Activated CD4-positive, alpha-beta memory T cell treated with anti-CD3 and anti-CD28 coated beads for 36 hours (primary cell): ENCODE measurements at regions of chr7 and their contacts with region 1.

Region 1: GRCh38 chr7:148962823-148963582 is 65.3 kb downstream of the PDIA4 start:
- DNase-seq: peak; percentile 81
- H3K4me3 Mint-ChIP-seq: peak overlapping the region; percentile 92
- H3K27ac Mint-ChIP-seq: peak overlapping the region; percentile 87
- H3K4me1 Mint-ChIP-seq: peaks cover 23% of the 10 kb centered on the region
- H3K27me3 Mint-ChIP-seq: no peaks in the 10 kb centered on the region

Region 2: DNA sequence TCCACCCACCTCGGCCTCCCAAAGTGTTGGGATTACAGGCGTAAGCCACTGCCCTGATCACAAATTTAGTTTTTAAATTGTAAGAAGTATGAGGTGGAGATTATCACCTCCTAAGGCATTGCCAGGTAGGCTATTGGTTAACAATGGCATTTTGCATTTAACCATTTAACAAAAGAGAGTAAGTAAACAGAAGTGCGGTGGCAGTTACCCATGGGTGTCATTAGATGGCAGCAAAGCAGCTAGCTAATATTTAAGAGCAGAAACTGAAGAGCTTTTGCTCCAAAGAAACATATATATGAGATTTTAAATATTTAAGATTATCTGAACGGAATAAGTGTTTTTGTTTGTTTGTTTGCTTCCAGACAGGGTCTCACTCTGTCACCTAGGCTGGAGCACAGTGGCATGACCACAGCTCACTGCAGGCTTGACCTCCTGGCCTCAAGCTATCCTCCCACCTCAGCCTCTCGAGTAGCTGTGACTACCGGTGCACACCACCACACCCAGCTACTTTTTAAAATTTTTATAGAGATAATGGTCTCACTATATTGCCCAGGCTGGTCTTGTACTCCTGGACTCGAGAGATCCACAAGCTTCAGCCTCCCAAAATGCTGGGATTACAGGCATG is 698.0 kb before region 1 on chr7:
- CTCF ChIA-PET with region 1: interaction called, 6 read pairs
- POLR2A ChIA-PET with region 1: no interaction called
- intact Hi-C with region 1: loop called (anchors 2 kb)
- DNase-seq: no peak
- H3K4me3 Mint-ChIP-seq: no peak overlapping the region
- H3K27ac Mint-ChIP-seq: no peak overlapping the region
- H3K4me1 Mint-ChIP-seq: peaks cover 8% of the 10 kb centered on the region
- H3K27me3 Mint-ChIP-seq: peaks cover 9% of the 10 kb centered on the region

Region 3: DNA sequence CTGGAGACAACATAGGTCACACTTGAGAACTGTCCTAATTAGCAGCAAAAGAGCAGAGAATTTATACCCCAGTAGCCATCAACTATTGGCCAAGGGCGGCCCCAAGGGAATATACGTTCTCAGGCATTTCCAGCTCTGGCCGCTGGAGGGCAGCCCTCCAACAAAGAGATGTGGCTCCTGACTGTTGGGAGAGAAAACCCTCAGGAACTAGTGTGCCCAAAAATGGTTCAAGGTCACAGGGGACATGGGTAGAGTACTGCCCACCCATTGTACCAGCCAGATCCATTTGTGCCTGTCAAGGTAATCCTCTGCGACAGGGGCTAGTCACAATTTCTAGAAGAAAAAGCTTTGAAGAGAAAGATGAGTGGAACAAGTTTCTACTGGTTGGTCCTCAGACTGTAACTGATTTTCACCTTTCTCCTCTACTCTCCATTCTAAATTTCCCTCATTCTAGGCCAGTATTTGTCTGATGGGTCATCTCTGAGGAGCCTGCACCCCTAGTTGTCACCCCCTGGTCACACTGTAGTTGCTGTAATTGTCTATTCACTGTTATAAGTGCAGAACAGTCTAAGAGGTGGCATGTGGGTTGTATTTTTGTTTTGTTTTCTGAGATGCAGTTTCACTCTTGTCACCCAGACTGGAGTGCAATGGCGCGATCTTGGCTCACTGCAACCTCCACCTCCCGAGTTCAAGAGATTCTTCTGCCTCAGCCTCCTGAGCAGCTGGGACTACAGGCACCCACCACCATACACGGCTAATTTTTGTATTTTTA is 387.2 kb before region 1 on chr7:
- CTCF ChIA-PET with region 1: interaction called, 30 read pairs
- POLR2A ChIA-PET with region 1: no interaction called
- intact Hi-C with region 1: loop called (anchors 1 kb)
- DNase-seq: peak; percentile 80
- H3K4me3 Mint-ChIP-seq: no peak overlapping the region
- H3K27ac Mint-ChIP-seq: no peak overlapping the region
- H3K4me1 Mint-ChIP-seq: peaks cover 6% of the 10 kb centered on the region
- H3K27me3 Mint-ChIP-seq: peaks cover 6% of the 10 kb centered on the region

Region 4: GRCh38 chr7:148773334-148773733 is 189.7 kb before region 1 on chr7:
- CTCF ChIA-PET with region 1: interaction called, 8 read pairs
- POLR2A ChIA-PET with region 1: no interaction called
- intact Hi-C with region 1: loop called (anchors 10 kb)
- DNase-seq: peak; percentile 57
- H3K4me3 Mint-ChIP-seq: no peak overlapping the region
- H3K27ac Mint-ChIP-seq: peak overlapping the region; percentile 86
- H3K4me1 Mint-ChIP-seq: peaks cover 28% of the 10 kb centered on the region
- H3K27me3 Mint-ChIP-seq: no peaks in the 10 kb centered on the region

Region 5: DNA sequence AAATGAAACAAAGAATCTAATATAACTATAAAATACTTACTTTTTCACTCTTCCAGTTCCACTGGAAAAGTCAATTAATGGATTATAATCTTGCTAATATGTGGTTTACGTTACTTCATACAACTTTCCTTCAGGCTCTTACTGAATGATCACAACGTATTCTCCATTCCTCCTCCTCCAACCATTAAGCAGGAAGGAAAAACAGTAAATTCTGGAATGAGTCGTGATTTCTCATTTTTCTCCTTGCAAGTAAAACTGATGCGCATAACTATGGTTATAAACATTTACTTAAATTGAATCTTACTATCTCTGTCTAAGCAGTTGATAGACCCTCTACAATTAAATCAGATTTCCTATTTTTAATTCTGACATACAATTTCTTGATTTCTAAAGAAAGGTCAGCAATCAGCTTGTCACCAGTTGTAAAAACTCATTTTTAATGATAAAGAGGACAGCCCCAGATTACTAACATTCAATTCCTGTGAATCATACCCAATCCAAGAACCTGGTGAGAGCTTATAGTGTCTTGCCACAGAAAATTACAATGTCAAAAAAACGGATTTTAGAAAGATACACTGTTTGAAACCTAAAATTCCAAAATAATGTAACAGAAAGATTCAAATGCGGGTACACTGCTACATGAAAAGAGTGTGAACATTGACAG is 143.2 kb before region 1 on chr7:
- CTCF ChIA-PET with region 1: interaction called, 13 read pairs
- POLR2A ChIA-PET with region 1: no interaction called
- intact Hi-C with region 1: no loop called
- DNase-seq: no peak
- H3K4me3 Mint-ChIP-seq: no peak overlapping the region
- H3K27ac Mint-ChIP-seq: no peak overlapping the region
- H3K4me1 Mint-ChIP-seq: no peaks in the 10 kb centered on the region
- H3K27me3 Mint-ChIP-seq: no peaks in the 10 kb centered on the region

Region 6: GRCh38 chr7:148884299-148885022 is 78.5 kb before region 1 on chr7:
- CTCF ChIA-PET with region 1: interaction called, 4 read pairs
- POLR2A ChIA-PET with region 1: interaction called, 3 read pairs
- intact Hi-C with region 1: loop called (anchors 1 kb)
- DNase-seq: peak; percentile 96
- H3K4me3 Mint-ChIP-seq: peak overlapping the region; percentile 92
- H3K27ac Mint-ChIP-seq: peak overlapping the region; percentile 98
- H3K4me1 Mint-ChIP-seq: peaks cover 31% of the 10 kb centered on the region
- H3K27me3 Mint-ChIP-seq: no peaks in the 10 kb centered on the region

Region 7: DNA sequence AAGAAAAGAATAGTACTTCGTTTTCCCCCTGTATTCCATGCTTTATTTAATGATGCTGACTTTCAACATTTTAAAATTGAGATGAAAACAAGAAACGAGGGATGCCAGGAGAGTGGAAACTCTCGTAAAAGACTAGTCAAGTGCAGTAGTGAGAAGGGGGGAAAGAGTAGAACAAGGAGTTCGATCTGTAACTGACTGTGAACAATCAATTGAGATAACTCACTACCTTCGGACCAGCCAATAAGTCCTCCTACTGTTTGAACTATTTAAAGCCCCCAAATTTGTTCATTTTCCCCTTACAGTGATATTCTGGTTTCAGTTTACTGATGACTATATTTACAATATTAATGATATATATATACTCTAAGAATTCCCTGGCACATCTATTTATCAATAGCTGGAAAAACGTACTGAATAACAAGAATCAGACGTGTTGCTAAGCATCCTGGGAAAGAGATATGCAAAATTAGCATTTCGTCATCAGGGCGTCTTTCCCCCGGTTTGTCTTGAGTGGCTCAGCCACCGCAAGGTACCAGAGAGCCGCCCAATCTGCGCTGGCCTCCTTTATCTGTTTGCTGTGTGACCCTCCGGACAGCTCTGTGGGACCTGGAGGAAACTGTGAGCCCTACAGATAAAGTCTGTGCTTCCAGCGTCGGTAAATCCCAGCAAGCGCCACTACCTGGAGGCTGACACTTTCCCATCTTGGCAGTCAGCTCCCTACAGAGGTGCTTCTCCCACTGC is 24.2 kb after region 1 on chr7:
- CTCF ChIA-PET with region 1: interaction called, 10 read pairs
- POLR2A ChIA-PET with region 1: no interaction called
- intact Hi-C with region 1: no loop called
- DNase-seq: peak; percentile 87
- H3K4me3 Mint-ChIP-seq: peak overlapping the region; percentile 95
- H3K27ac Mint-ChIP-seq: peak overlapping the region; percentile 92
- H3K4me1 Mint-ChIP-seq: peaks cover 40% of the 10 kb centered on the region
- H3K27me3 Mint-ChIP-seq: peaks cover 2% of the 10 kb centered on the region

Region 8: GRCh38 chr7:149005241-149006050 is 42.4 kb after region 1 on chr7:
- CTCF ChIA-PET with region 1: no interaction called
- POLR2A ChIA-PET with region 1: no interaction called
- intact Hi-C with region 1: no loop called
- DNase-seq: peak; percentile 85
- H3K4me3 Mint-ChIP-seq: no peak overlapping the region
- H3K27ac Mint-ChIP-seq: no peak overlapping the region
- H3K4me1 Mint-ChIP-seq: peaks cover 3% of the 10 kb centered on the region
- H3K27me3 Mint-ChIP-seq: no peaks in the 10 kb centered on the region

Region 9: DNA sequence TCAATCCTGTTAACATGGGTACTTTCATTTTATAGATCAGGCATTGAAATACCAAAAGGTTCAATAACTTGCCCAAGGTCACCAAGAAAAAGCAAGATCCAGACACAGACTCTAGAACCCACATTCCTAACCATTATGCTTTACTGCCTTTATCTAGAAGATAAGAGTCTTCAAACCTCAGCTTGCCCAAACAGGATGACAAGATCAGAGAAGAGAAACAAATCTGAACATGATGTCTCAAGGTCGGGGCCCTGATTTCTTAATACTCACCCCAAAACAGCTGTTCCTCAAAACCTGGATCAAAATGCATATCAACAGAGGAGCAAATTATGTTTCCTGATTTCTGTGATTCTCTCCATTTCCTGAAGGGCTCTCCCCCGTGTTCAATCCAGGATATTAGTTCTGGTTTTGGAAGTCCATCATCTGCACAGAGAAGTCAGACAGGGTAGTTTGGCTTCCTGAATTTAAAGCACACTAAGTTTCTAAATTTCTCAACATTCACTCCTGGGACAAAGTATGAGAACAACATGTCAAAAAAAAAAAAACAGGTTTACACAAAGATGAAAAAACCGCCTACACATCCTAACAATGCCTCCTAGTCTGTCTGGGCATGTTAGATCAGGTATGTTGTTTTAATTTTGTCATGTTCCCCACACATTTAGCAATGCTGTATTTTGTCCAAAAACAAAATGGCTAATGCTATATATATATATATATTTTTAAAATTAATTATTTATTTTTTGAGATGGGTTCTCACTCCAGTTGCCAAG is 111.3 kb after region 1 on chr7:
- CTCF ChIA-PET with region 1: no interaction called
- POLR2A ChIA-PET with region 1: no interaction called
- intact Hi-C with region 1: no loop called
- DNase-seq: no peak
- H3K4me3 Mint-ChIP-seq: no peak overlapping the region
- H3K27ac Mint-ChIP-seq: peak overlapping the region; percentile 18
- H3K4me1 Mint-ChIP-seq: peaks cover 4% of the 10 kb centered on the region
- H3K27me3 Mint-ChIP-seq: no peaks in the 10 kb centered on the region